ENCODE measurements at regions of chr7 and their contacts with region 1.

Region 1: DNA sequence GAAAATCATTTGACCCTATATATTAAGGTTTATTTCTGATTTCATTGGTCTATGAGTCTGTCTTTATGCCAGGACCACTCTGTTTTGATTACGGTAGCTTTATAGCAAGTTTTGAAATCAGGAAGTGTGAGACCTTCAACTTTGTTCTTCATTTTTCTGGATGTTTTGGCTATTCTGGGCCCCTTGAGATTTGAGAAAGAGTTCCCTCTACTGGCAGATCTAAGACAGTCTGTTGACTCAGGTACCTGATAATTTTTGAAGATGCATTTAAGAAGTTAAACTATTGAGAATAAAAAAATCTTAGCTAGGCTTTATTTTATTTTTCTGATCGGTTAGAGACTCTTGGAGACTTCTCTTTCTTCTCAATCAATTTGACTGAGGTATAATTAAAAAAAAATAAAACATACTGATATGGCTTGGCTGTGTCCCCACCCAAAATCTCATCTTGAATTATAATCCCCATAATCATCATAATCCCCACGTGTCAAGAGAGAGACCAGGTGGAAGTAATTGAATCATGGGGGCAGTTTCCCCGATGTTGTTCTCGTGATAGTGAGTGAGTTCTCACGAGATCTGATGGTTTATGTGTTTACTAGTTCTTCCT is 209.2 kb downstream of the SNX10 start:
- DNase-seq: peak; percentile 27
- H3K4me3 ChIP-seq: no peak overlapping the region
- H3K27ac ChIP-seq: no peak overlapping the region
- H3K4me1 ChIP-seq: no peaks in the 10 kb centered on the region
- H3K27me3 ChIP-seq: no peaks in the 10 kb centered on the region
- CTCF ChIP-seq: peak; percentile 37 to 65

Region 2: GRCh38 chr7:26376175-26376917 is 124.5 kb before region 1 on chr7:
- CTCF ChIA-PET with region 1: no interaction called
- dilution Hi-C with region 1: no loop called
- in situ Hi-C with region 1: loop called in 1 of 2 experiments (anchors 10 kb)
- intact Hi-C with region 1: no loop called
- DNase-seq: no peak
- H3K4me3 ChIP-seq: peak overlapping the region; percentile 31 to 42 (median 39)
- H3K27ac ChIP-seq: no peak overlapping the region
- H3K4me1 ChIP-seq: peaks cover 13% of the 10 kb centered on the region
- H3K27me3 ChIP-seq: peaks cover 2% of the 10 kb centered on the region
- CTCF ChIP-seq: no peak

Region 3: GRCh38 chr7:26686448-26686981 is 185.7 kb after region 1 on chr7:
- CTCF ChIA-PET with region 1: no interaction called
- dilution Hi-C with region 1: no loop called
- in situ Hi-C with region 1: no loop called
- intact Hi-C with region 1: no loop called
- DNase-seq: peak; percentile 31
- H3K4me3 ChIP-seq: no peak overlapping the region
- H3K27ac ChIP-seq: peak overlapping the region; percentile 4
- H3K4me1 ChIP-seq: peaks cover 19% of the 10 kb centered on the region
- H3K27me3 ChIP-seq: no peaks in the 10 kb centered on the region
- CTCF ChIP-seq: peak; percentile 48 to 53

Measured in mammary epithelial cell (primary cell).